Colonic mucosa (tissue), 4 donors: ENCODE measurements at regions of chr15 and their contacts with region 1.

Region 1: DNA sequence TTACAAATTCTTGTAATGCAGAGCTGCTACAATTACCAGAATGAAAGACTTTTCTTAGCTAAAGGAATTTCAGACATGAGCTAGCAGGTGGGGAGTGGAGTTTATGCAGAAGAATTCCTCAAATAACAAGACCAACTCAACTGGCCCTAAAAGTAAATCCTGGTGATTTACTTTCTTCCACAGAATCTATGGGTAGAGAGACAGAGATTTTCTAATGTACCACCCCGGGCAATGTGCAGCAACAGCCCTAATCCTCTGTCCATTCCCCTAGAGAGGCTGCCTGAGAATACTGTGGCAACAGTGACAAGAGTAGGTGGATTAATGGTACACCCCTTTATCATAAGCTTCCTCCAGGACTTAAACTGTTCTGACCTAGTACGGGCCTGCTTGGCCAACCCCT is 55.2 kb downstream of the AQR start:
- DNase-seq: no peak
- H3K4me3 ChIP-seq: no peak overlapping the region
- H3K27ac ChIP-seq: no peak overlapping the region
- H3K4me1 ChIP-seq: no peaks in the 10 kb centered on the region
- H3K27me3 ChIP-seq: no peaks in the 10 kb centered on the region
- CTCF ChIP-seq: no peak

Region 2: DNA sequence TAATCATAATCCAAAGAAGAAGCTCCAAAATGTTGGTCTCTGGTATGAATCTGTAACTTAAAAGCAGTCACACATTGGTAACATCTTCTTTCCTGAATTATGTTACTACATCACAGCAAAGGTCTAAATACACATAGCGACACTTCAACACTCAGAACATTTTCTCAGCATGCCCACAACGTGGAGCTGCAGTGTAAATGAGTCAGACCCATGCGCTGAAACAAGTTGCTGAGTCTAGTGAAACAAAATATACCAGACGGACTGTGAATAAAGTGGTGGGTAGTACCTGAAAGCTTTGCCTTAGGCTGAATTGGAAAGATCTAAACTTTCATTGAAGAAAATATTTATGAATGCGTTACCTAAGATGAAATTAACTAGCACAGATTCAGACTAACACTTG is 297.7 kb before region 1 on chr15:
- intact Hi-C with region 1: loop called (anchors 10 kb)
- DNase-seq: no peak
- H3K4me3 ChIP-seq: no peak overlapping the region
- H3K27ac ChIP-seq: no peak overlapping the region
- H3K4me1 ChIP-seq: no peaks in the 10 kb centered on the region
- H3K27me3 ChIP-seq: no peaks in the 10 kb centered on the region
- CTCF ChIP-seq: no peak

Region 3: GRCh38 chr15:34861214-34861613 is 53.1 kb before region 1 on chr15:
- intact Hi-C with region 1: loop called (anchors 10 kb)
- DNase-seq: no peak
- H3K4me3 ChIP-seq: no peak overlapping the region
- H3K27ac ChIP-seq: no peak overlapping the region
- H3K4me1 ChIP-seq: no peaks in the 10 kb centered on the region
- H3K27me3 ChIP-seq: no peaks in the 10 kb centered on the region
- CTCF ChIP-seq: no peak